IMR-90 (cell line): ENCODE measurements at regions of chr7 and their contacts with region 1.

Region 1: GRCh38 chr7:96075510-96076349 is 246.2 kb downstream of the SLC25A13 start:
- DNase-seq: peak; percentile 56
- ATAC-seq: peak; percentile 99
- H3K4me3 ChIP-seq: peak overlapping the region; percentile 58
- H3K27ac ChIP-seq: no peak overlapping the region
- H3K4me1 ChIP-seq: 0 out of 2 replicates have a peak, but pooled peaks cover 2% of the 10 kb centered on the region
- H3K27me3 ChIP-seq: peaks cover 10% of the 10 kb centered on the region
- CTCF ChIP-seq: peak; percentile 83
- POLR2A ChIP-seq: 0 out of 2 replicates have a peak, but pooled peaks have one; percentile 27
- RAD21 ChIP-seq: peak; percentile 86

Region 2: DNA sequence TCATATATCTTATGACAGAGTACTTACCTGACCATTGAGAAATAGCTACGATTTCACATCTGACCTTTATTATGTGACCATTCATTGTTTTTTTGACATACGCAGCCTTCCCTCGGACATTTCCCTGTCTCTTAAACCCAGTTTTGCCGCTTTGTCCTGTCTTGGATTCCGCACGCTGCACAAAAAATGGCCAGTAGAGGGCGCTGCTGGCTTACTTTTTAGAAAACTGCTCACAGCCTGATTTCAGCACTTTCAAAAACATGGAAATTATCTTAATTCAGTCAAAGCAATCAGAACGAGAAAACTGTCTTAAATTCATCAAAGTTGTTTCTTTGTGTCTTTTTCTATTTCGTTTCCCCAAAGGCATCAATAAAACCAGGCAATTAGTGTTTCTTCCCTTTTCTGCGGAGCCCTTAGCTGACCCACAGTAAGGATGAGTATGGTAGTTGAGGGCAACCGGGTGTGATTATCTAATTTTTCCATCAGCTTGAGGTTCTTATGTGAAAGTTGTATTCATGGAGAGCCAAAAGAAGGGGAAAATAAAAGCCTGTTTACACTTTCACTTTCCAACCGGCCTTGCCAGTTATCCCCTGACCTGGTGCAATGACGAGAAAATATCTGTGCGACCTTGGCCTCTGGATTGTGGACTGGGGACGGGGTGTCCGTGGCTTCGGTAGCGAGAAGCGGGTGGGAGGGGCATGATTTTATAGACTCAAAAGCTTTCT is 159.0 kb before region 1 on chr7:
- CTCF ChIA-PET with region 1: no interaction called
- POLR2A ChIA-PET with region 1: no interaction called
- dilution Hi-C with region 1: no loop called
- in situ Hi-C with region 1: no loop called
- intact Hi-C with region 1: loop called (anchors 1 kb)
- DNase-seq: peak; percentile 58
- ATAC-seq: peak; percentile 86
- H3K4me3 ChIP-seq: no peak overlapping the region
- H3K27ac ChIP-seq: no peak overlapping the region
- H3K4me1 ChIP-seq: no peaks in the 10 kb centered on the region
- H3K27me3 ChIP-seq: no peaks in the 10 kb centered on the region; the same call in 1 of the 2 replicates
- CTCF ChIP-seq: peak; percentile 94
- POLR2A ChIP-seq: no peak
- RAD21 ChIP-seq: peak; percentile 86

Region 3: GRCh38 chr7:96321658-96322372 is 246.1 kb after region 1 on chr7 and contains the start of gene SLC25A13:
- CTCF ChIA-PET with region 1: no interaction called
- POLR2A ChIA-PET with region 1: no interaction called
- dilution Hi-C with region 1: no loop called
- in situ Hi-C with region 1: no loop called
- intact Hi-C with region 1: loop called (anchors 2 kb)
- DNase-seq: peak; percentile 73
- ATAC-seq: peak; percentile 97
- H3K4me3 ChIP-seq: peak within 1 kb of the TSS; percentile 60
- H3K27ac ChIP-seq: peak within 1 kb of the TSS; percentile 66
- H3K4me1 ChIP-seq: no peaks in the 10 kb centered on the region
- H3K27me3 ChIP-seq: no peaks in the 10 kb centered on the region
- CTCF ChIP-seq: no peak
- POLR2A ChIP-seq: peak; percentile 62
- RAD21 ChIP-seq: no peak
- total RNA-seq, gene SLC25A13: 11.7 and 13.6 TPM in 2 replicates

Region 4: GRCh38 chr7:96414931-96415292 is 339.2 kb after region 1 on chr7:
- CTCF ChIA-PET with region 1: interaction called, 3 read pairs
- POLR2A ChIA-PET with region 1: no interaction called
- dilution Hi-C with region 1: no loop called
- in situ Hi-C with region 1: no loop called
- intact Hi-C with region 1: loop called (anchors 2 kb)
- DNase-seq: peak; percentile 30
- ATAC-seq: peak; percentile 73
- H3K4me3 ChIP-seq: no peak overlapping the region
- H3K27ac ChIP-seq: no peak overlapping the region
- H3K4me1 ChIP-seq: no peaks in the 10 kb centered on the region
- H3K27me3 ChIP-seq: no peaks in the 10 kb centered on the region
- CTCF ChIP-seq: peak; percentile 61
- POLR2A ChIP-seq: no peak
- RAD21 ChIP-seq: peak; percentile 60

Region 5: DNA sequence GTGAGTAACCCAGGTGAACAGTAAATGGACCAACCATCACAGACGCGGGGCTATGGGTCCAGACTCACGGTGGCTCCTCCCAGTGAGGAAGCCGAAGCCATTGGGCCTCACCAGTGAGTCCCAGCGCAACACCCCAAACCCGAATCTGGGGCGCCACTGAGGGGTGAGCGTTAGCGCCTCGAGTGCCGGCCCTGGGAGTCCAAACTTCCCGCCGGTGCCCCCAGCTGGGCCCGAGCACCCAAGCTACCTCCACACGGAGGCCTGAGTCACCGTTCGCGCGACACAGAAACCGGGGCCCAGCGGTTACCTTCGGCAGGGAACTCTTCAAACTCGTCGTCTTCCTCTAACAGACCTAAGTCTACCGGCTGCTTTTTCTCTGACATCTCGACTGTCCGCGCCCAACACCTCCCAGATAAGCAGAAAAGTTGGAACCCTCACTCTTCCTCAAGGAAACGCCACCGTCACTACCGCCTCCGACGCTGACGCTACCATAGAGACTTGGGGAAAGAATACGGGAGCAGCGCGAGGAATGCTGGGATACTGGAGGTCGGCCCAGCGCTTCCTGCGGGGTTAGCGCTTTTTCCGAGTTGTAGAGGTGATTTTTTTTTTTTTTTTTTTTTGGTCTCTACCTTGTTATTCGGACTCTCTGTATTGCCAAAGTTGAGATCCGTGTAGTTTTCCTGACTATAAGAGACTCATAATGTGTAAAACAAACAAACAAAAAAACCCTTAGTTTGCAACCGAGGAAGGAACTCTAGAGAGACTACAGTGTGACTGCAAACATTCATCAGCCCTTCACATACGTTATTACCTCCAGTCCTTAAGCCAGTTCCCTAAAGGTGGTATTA is 633.9 kb after region 1 on chr7 and contains the start of gene SEM1:
- CTCF ChIA-PET with region 1: no interaction called
- POLR2A ChIA-PET with region 1: no interaction called
- dilution Hi-C with region 1: no loop called
- in situ Hi-C with region 1: no loop called
- intact Hi-C with region 1: loop called (anchors 10 kb)
- DNase-seq: peak; percentile 84
- ATAC-seq: peak; percentile 99
- H3K4me3 ChIP-seq: peak within 1 kb of the TSS; percentile 77
- H3K27ac ChIP-seq: peak within 1 kb of the TSS; percentile 81
- H3K4me1 ChIP-seq: peaks cover 1% of the 10 kb centered on the region; the same call in 1 of the 2 replicates
- H3K27me3 ChIP-seq: no peaks in the 10 kb centered on the region
- CTCF ChIP-seq: no peak
- POLR2A ChIP-seq: peak; percentile 93
- RAD21 ChIP-seq: no peak
- total RNA-seq, gene SEM1: 17.2 and 23.6 TPM in 2 replicates

Region 6: DNA sequence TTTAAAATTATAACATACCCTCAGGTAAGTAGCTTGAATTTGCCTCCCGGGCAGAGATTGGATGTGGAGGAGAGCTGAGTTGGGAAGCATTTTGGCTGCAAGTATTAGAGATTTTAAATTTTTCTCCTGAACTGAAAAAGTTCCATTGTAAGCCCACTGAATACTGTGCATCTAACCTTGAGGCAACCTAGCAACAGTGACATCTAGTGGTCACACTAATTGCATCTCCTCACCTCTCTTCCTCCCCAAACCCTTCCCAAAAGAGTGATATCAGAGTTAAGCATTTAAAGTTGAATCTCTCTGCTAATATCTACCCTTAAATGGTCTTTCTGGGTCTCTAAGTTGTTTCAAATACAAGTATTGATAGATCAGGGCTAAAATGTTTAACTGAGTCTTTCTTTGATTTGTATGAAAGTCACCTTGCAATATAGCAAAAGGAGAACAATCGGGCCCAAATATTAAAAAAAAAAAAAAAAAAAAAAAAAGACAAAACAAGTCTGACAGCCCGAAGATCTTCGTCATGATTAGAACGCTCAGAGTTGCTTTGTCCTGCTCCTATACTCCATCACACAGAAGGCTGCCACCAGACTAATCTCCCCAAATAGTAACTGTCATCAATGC is 989.3 kb after region 1 on chr7:
- CTCF ChIA-PET with region 1: no interaction called
- POLR2A ChIA-PET with region 1: no interaction called
- dilution Hi-C with region 1: no loop called
- in situ Hi-C with region 1: no loop called
- intact Hi-C with region 1: loop called (anchors 1 kb)
- DNase-seq: peak; percentile 58
- ATAC-seq: peak; percentile 92
- H3K4me3 ChIP-seq: no peak overlapping the region
- H3K27ac ChIP-seq: no peak overlapping the region
- H3K4me1 ChIP-seq: no peaks in the 10 kb centered on the region
- H3K27me3 ChIP-seq: no peaks in the 10 kb centered on the region
- CTCF ChIP-seq: peak; percentile 59
- POLR2A ChIP-seq: no peak
- RAD21 ChIP-seq: peak; percentile 44